CD8-positive, alpha-beta memory T cell (primary cell): ENCODE measurements at regions of chr5 and their contacts with region 1.

Region 1: GRCh38 chr5:178075840-178076548 is 37.3 kb upstream of the N4BP3 start:
- DNase-seq: peak; percentile 66 to 86 (median 75)
- H3K4me3 ChIP-seq: no peak overlapping the region
- H3K4me3 Mint-ChIP-seq: peak overlapping the region in 2 of 7 donors; percentile 25
- H3K27ac ChIP-seq: no peak overlapping the region
- H3K27ac Mint-ChIP-seq: peak overlapping the region in 1 of 8 donors; percentile 78
- H3K4me1 ChIP-seq: no peaks in the 10 kb centered on the region
- H3K4me1 Mint-ChIP-seq: peaks cover 5 to 6% (median 5%) of the 10 kb centered on the region in 3 donors
- H3K27me3 ChIP-seq: no peaks in the 10 kb centered on the region
- H3K27me3 Mint-ChIP-seq: peaks cover 6 to 10% of the 10 kb centered on the region in 2 donors

Region 2: DNA sequence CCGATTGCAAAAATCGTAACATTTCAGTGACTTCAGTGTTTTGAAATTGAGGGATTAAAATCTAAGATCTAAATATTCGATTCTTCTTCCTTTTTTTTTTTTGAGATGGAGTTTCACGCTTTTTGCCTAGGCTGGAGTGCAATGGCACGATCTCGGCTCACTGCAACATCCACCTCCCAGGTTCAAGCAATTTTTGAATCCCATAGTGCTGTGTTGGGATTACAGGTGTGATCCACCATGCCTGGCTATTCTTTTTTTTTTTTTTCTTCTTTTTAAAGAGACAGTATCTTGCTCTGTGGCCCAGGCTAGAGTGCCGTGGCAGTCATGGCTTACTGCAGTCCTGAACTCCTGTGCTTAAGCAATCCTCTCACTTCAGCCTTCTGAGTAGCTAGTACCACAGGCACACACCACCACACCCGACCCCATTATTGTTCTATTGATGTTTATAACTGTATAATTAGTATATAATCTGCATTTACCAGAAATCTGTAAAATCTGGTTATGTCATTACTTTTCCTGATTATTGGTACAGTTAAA is 899.8 kb before region 1 on chr5:
- CTCF ChIA-PET with region 1: no interaction called
- POLR2A ChIA-PET with region 1: no interaction called
- DNase-seq: no peak
- H3K4me3 ChIP-seq: no peak overlapping the region
- H3K4me3 Mint-ChIP-seq: no peak overlapping the region
- H3K27ac ChIP-seq: no peak overlapping the region
- H3K27ac Mint-ChIP-seq: peak overlapping the region in 4 of 8 donors; percentile 33 to 62 (median 48)
- H3K4me1 ChIP-seq: peaks cover 8% of the 10 kb centered on the region
- H3K4me1 Mint-ChIP-seq: peaks cover 27 to 69% (median 40%) of the 10 kb centered on the region in 3 donors
- H3K27me3 ChIP-seq: no peaks in the 10 kb centered on the region
- H3K27me3 Mint-ChIP-seq: no peaks in the 10 kb centered on the region

Region 3: GRCh38 chr5:178090858-178091540 is 15.0 kb after region 1 on chr5:
- CTCF ChIA-PET with region 1: interaction called, 11 read pairs
- POLR2A ChIA-PET with region 1: no interaction called
- DNase-seq: no peak
- H3K4me3 ChIP-seq: no peak overlapping the region
- H3K4me3 Mint-ChIP-seq: no peak overlapping the region
- H3K27ac ChIP-seq: no peak overlapping the region
- H3K27ac Mint-ChIP-seq: no peak overlapping the region
- H3K4me1 ChIP-seq: peaks cover 13% of the 10 kb centered on the region
- H3K4me1 Mint-ChIP-seq: peaks cover 11 to 17% (median 15%) of the 10 kb centered on the region in 3 donors
- H3K27me3 ChIP-seq: no peaks in the 10 kb centered on the region
- H3K27me3 Mint-ChIP-seq: peaks cover 6 to 12% of the 10 kb centered on the region in 2 donors

Region 4: DNA sequence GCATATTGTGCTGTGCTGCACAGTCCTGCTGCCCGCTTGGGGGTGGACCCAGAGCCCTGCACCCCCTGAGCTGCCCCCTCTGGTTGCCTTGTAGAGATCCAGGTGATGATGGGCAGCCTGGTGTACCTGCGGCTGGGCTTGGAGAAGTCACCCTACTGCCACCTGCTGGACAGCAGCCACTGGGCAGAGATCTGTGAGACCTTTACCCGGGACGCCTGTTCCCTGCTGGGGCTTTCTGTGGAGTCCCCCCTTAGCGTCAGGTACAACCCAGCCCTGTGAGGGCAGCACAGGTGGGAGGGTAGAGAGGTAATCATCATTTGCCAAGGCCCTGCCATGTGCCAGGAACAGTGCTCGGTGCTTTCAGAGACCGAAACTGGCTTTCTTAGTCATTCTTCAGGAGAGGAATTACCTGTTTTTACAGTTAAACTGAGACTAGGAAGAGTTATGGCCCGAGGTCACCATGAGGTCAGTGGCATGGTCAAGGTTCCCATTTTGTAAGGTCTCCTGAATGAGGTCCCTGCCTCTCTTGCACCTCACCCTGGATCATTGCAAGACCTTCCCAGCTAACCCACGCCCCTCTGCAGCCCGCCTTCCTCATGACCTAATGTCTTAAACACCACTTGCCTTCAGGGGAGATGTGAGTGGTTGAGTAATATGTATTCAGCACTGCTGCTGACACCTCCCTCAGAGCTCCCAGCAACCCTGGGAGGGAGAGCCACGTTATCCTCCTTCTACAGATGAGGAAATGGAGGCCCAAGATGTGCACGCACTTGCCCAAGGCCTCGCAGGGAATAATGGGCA is 70.2 kb after region 1 on chr5:
- CTCF ChIA-PET with region 1: interaction called, 172 read pairs
- POLR2A ChIA-PET with region 1: interaction called, 10 read pairs
- DNase-seq: peak; percentile 61 to 85 (median 66)
- H3K4me3 ChIP-seq: no peak overlapping the region
- H3K4me3 Mint-ChIP-seq: peak overlapping the region in 1 of 7 donors; percentile 52
- H3K27ac ChIP-seq: no peak overlapping the region
- H3K27ac Mint-ChIP-seq: peak overlapping the region in 4 of 8 donors; percentile 45 to 74 (median 60)
- H3K4me1 ChIP-seq: no peaks in the 10 kb centered on the region
- H3K4me1 Mint-ChIP-seq: peaks cover 7 to 13% (median 12%) of the 10 kb centered on the region in 3 donors
- H3K27me3 ChIP-seq: no peaks in the 10 kb centered on the region
- H3K27me3 Mint-ChIP-seq: no peaks in the 10 kb centered on the region

Region 5: DNA sequence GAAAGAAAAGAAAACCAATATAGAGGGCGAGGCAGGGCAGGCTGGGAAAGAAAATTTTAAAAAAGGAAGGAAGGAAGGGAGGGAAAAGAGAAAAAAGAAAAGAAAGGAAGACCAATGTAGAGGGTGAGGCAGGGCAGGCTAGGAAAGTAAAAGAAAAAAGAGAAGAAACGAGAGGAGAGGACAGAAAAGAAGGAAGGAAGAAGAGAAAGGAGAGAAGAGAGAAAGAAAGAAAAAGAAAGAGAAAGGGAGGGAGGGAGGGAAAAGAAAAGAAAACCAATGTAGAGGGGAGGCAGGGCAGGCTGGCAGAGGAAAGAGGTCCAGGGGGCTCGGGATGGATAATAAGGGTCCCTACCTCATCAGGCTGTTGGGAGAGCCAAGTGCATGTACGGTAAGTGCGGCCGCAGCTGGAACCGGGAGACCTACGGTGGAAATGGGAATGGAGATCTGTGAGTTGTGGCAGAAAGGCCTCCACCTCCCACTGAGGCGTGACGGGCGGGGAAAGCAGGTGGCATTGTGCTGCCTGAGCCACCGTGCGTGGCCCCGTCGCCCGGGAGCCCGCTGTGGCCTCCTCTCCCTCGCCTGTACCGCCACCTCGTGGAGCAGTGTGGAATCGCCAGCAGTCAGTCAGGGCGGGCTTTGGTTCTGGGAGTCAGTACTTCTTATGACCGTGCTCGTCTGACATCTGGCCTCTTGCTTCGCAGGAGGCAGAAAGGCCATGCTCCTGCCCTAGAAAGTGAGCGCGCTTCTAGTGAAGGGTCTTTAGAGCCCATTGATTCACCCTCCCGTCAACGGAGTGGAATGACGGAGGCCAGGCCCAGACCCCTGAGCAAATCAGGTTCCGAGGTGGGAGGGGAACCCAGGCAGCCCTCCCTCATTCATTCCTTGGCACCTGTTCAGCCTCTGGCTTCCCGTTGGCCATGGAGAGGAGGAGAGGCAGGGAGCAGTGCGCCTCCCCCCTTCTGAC is 88.1 kb after region 1 on chr5:
- CTCF ChIA-PET with region 1: interaction called, 31 read pairs
- POLR2A ChIA-PET with region 1: no interaction called
- DNase-seq: peak; percentile 81 to 91 (median 89)
- H3K4me3 ChIP-seq: no peak overlapping the region
- H3K4me3 Mint-ChIP-seq: no peak overlapping the region
- H3K27ac ChIP-seq: no peak overlapping the region
- H3K27ac Mint-ChIP-seq: no peak overlapping the region
- H3K4me1 ChIP-seq: peaks cover 7% of the 10 kb centered on the region
- H3K4me1 Mint-ChIP-seq: peaks cover 6 to 8% (median 7%) of the 10 kb centered on the region in 3 donors
- H3K27me3 ChIP-seq: peaks cover 3% of the 10 kb centered on the region
- H3K27me3 Mint-ChIP-seq: peaks cover 17 to 18% of the 10 kb centered on the region in 2 donors

Region 6: DNA sequence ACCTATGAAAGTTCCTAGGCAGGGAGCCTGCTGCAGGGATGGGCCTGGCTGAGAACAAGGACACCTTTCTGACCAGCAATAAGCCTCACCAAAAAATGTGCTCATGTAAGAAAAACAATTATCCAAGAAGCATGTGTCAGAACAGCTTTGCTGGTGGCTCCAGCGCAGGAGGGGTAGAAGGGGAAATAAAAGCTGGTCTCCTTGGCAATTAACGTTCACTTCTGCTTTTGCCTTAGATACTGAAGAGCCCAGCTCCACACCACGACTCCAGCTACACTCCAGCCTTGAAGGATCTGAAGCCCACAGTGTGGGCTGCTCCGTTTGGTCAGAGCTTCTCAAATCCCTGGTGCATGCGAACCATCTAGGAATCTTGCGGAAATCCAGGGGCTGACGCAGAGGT is 264.2 kb after region 1 on chr5:
- CTCF ChIA-PET with region 1: no interaction called
- POLR2A ChIA-PET with region 1: no interaction called
- DNase-seq: no peak
- H3K4me3 ChIP-seq: no peak overlapping the region
- H3K4me3 Mint-ChIP-seq: no peak overlapping the region
- H3K27ac ChIP-seq: no peak overlapping the region
- H3K27ac Mint-ChIP-seq: no peak overlapping the region
- H3K4me1 ChIP-seq: no peaks in the 10 kb centered on the region
- H3K4me1 Mint-ChIP-seq: no peaks in the 10 kb centered on the region
- H3K27me3 ChIP-seq: no peaks in the 10 kb centered on the region
- H3K27me3 Mint-ChIP-seq: peaks cover 2 to 17% of the 10 kb centered on the region in 2 donors